CD4-positive, alpha-beta memory T cell (primary cell): ENCODE measurements at regions of chrX and their contacts with region 1.

Region 1: DNA sequence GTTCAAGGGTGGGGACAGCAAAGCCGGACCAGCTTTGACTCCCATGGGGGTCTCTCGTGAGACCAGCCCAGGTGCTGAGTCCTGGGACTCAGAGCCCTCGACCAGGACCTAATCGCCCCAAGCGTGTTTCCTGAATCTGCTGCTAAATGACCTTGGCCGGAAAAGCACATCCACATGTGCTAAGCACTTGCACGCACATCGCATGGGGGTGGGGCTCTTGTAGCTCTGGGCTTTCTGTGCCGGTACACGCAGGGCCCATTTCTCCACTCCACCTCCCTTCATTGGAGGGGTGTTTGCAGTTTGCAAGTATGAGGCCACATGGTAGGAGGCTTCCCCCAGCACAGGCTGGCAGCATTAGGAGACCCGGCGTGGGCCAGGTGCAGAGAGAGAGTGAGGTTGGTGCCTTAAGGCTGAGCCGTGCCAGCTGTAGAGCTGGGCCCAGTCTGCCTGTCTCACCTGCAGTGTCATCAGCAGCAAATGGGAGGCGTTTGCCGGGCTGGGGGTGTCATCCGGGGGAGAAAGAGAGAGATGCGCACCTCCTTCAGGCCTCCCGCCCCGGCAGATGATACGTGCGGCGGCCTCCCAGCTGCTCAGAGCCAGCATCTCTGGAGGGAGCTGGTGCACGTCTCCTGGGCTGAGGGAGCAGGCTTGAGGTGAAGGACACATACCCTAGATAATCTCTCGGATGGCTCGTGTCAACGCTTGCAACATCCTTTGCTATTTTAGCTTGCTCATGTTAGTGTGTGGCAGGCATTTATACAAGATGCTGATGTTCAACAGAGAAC is 45.2 kb upstream of the CLCN4 start:
- DNase-seq: peak; percentile 46 to 79 (median 71)
- H3K4me3 ChIP-seq: peak overlapping the region in 1 of 2 donors; percentile 21
- H3K4me3 Mint-ChIP-seq: peak overlapping the region; percentile 52 to 92 (median 87)
- H3K27ac ChIP-seq: peak overlapping the region; percentile 78
- H3K27ac Mint-ChIP-seq: peak overlapping the region; percentile 69 to 99 (median 97)
- H3K4me1 ChIP-seq: peaks cover 65% of the 10 kb centered on the region
- H3K4me1 Mint-ChIP-seq: peaks cover 19 to 71% (median 50%) of the 10 kb centered on the region in 4 donors
- H3K27me3 ChIP-seq: no peaks in the 10 kb centered on the region
- H3K27me3 Mint-ChIP-seq: no peaks in the 10 kb centered on the region

Region 2: GRCh38 chrX:10014462-10015356 is 96.8 kb before region 1 on chrX:
- CTCF ChIA-PET with region 1: interaction called, 5 read pairs
- POLR2A ChIA-PET with region 1: interaction called, 11 read pairs
- intact Hi-C with region 1: loop called (anchors 2 kb)
- DNase-seq: peak; percentile 72 to 84 (median 80)
- H3K4me3 ChIP-seq: peak overlapping the region in 1 of 2 donors; percentile 19
- H3K4me3 Mint-ChIP-seq: peak overlapping the region; percentile 43 to 85 (median 66)
- H3K27ac ChIP-seq: peak overlapping the region; percentile 37
- H3K27ac Mint-ChIP-seq: peak overlapping the region in 4 of 7 donors; percentile 35 to 85 (median 60)
- H3K4me1 ChIP-seq: peaks cover 36% of the 10 kb centered on the region
- H3K4me1 Mint-ChIP-seq: peaks cover 18 to 48% (median 33%) of the 10 kb centered on the region in 4 donors
- H3K27me3 ChIP-seq: no peaks in the 10 kb centered on the region
- H3K27me3 Mint-ChIP-seq: no peaks in the 10 kb centered on the region

Region 3: GRCh38 chrX:10077425-10078188 is 33.9 kb before region 1 on chrX:
- CTCF ChIA-PET with region 1: interaction called, 19 read pairs
- POLR2A ChIA-PET with region 1: interaction called, 75 read pairs
- intact Hi-C with region 1: no loop called
- DNase-seq: peak in 4 of 5 donors; percentile 2 to 41 (median 16)
- H3K4me3 ChIP-seq: no peak overlapping the region
- H3K4me3 Mint-ChIP-seq: no peak overlapping the region
- H3K27ac ChIP-seq: no peak overlapping the region
- H3K27ac Mint-ChIP-seq: peak overlapping the region in 1 of 7 donors; percentile 19
- H3K4me1 ChIP-seq: peaks cover 14% of the 10 kb centered on the region
- H3K4me1 Mint-ChIP-seq: peaks cover 1 to 11% (median 4%) of the 10 kb centered on the region in 4 donors
- H3K27me3 ChIP-seq: no peaks in the 10 kb centered on the region
- H3K27me3 Mint-ChIP-seq: no peaks in the 10 kb centered on the region

Region 4: GRCh38 chrX:10083809-10084208 is 27.7 kb before region 1 on chrX:
- CTCF ChIA-PET with region 1: interaction called, 19 read pairs
- POLR2A ChIA-PET with region 1: interaction called, 75 read pairs
- intact Hi-C with region 1: loop called (anchors 2 kb)
- DNase-seq: no peak
- H3K4me3 ChIP-seq: no peak overlapping the region
- H3K4me3 Mint-ChIP-seq: peak overlapping the region in 4 of 8 donors; percentile 10 to 81 (median 68)
- H3K27ac ChIP-seq: peak overlapping the region; percentile 64
- H3K27ac Mint-ChIP-seq: peak overlapping the region; percentile 30 to 98 (median 95)
- H3K4me1 ChIP-seq: peaks cover 55% of the 10 kb centered on the region
- H3K4me1 Mint-ChIP-seq: peaks cover 28 to 55% (median 37%) of the 10 kb centered on the region in 4 donors
- H3K27me3 ChIP-seq: no peaks in the 10 kb centered on the region
- H3K27me3 Mint-ChIP-seq: no peaks in the 10 kb centered on the region

Region 5: DNA sequence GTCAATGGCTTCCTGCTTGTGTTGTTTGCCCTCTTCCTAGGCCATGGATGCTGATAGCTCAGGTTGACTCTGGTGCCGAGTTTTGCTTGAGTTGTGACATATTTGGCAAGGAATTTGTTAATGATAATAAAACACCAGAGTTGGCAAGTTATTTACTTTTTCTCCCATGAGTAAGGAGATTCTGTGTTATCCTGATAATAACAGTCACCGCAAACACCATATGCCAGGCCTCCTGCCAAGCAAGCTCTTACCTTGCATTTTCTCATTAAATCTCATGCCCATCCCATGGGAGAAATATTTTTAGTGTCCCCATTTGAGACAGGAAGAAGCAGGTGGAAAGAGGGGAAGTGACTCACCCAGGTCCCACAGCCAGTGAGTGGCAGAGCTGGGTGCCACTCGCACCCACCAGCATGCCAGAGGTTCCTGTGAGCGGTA is 22.2 kb before region 1 on chrX:
- CTCF ChIA-PET with region 1: interaction called, 19 read pairs
- POLR2A ChIA-PET with region 1: interaction called, 79 read pairs
- intact Hi-C with region 1: loop called (anchors 2 kb)
- DNase-seq: no peak
- H3K4me3 ChIP-seq: no peak overlapping the region
- H3K4me3 Mint-ChIP-seq: no peak overlapping the region
- H3K27ac ChIP-seq: no peak overlapping the region
- H3K27ac Mint-ChIP-seq: peak overlapping the region in 1 of 7 donors; percentile 25
- H3K4me1 ChIP-seq: peaks cover 30% of the 10 kb centered on the region
- H3K4me1 Mint-ChIP-seq: peaks cover 19 to 36% (median 24%) of the 10 kb centered on the region in 4 donors
- H3K27me3 ChIP-seq: no peaks in the 10 kb centered on the region
- H3K27me3 Mint-ChIP-seq: no peaks in the 10 kb centered on the region

Region 6: DNA sequence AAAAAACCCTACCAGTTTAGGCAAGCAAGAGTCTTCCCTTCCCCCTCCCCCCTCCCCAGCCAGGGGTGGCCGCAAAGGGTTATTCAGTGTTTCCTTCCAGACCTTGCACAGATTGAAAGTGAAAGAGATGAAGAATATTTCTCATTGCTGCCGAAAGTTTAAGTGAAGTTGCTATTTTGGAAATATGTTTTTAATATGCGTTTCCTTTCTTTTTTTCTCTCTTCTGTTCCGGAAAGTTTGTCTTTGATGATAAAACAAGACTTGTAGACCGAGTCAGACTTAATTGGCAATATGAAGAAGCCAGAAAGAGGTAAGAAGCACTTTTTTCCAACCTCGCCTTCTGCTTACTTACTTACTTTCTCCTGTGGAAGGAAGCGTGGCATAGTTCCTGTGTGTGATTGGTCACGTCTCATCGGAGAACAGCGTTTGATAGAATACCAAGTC is 13.3 kb before region 1 on chrX:
- CTCF ChIA-PET with region 1: interaction called, 31 read pairs
- POLR2A ChIA-PET with region 1: interaction called, 79 read pairs
- intact Hi-C with region 1: loop called (anchors 1 kb)
- DNase-seq: peak; percentile 46 to 82 (median 64)
- H3K4me3 ChIP-seq: peak overlapping the region; percentile 63 to 91
- H3K4me3 Mint-ChIP-seq: peak overlapping the region; percentile 83 to 96 (median 92)
- H3K27ac ChIP-seq: peak overlapping the region; percentile 67
- H3K27ac Mint-ChIP-seq: peak overlapping the region; percentile 89 to 96 (median 95)
- H3K4me1 ChIP-seq: peaks cover 57% of the 10 kb centered on the region
- H3K4me1 Mint-ChIP-seq: peaks cover 22 to 71% (median 43%) of the 10 kb centered on the region in 4 donors
- H3K27me3 ChIP-seq: no peaks in the 10 kb centered on the region
- H3K27me3 Mint-ChIP-seq: no peaks in the 10 kb centered on the region